Endothelial cell of umbilical vein (primary cell): ENCODE measurements at regions of chr5 and their contacts with region 1.

Region 1: DNA sequence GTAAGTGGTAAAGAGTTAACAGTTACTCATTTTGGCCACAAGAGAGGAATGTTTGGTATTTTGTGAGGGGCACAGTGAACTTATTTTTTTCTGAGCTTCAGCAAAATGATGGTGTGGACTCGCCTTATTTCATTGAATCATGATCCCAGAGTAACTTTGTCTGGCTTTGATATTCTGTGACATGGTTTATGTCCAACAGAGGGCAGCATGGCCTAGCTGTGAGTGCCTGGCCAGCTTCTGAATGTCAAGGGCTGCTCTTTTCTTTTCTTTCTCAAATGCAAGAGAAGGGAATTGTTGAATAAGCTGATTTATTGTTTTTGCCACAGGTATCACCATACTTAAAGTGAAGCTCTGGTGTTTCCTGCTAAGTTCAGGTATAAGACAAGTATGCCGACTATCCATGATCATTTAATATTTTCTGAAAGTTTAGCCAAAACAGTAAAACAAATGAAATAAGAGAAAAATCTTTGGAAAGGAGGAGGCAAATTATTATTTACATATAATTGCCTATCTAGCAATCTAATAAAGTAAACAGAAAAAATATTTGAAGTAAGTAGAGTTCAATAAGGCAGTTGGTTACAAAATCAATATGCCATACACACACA is 31.7 kb downstream of the MRPL22 start:
- DNase-seq: peak; percentile 74
- H3K4me3 ChIP-seq: no peak overlapping the region
- H3K27ac ChIP-seq: no peak overlapping the region
- H3K4me1 ChIP-seq: peaks cover 18% of the 10 kb centered on the region
- H3K27me3 ChIP-seq: no peaks in the 10 kb centered on the region
- CTCF ChIP-seq: peak; percentile 66 to 69
- POLR2A ChIP-seq: no peak

Region 2: DNA sequence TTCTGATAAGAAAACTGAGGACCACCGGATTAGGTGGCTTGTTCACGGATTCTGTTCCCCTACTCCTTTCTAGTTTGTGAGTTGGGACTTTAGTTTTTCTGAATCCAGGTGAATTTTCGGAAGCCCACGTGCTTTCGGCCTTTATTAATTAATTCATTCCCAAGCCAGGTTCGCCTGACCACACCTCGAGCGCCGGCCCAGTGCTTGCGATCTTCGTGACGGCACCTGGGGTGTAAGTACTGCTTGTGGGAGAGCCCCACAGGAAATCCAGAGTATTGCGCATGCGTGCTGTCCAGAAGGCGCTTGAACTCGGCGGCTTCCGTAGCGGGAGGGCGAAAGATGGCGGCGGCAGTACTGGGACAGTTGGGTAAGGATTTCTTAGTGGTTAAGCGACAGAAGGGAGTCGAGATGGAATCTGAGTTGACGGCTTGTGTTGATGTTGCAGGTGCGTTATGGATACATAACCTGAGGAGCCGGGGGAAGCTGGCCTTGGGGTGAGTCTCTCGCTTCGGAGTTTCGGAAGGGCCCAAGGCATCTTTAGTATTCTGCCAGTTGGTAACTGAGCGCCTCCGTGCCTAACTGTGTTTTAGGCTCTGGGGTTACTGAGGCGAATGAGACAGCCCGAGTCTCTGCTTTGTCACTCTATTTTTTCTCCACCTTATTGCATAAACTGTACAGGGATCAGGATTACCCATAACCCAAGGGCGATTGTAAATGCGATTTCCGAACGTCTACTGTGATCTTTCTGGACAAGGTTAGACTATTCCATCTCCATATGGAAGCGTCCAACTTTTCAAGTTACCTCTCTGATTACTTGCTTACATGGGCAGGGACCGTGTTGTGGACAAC is 31.6 kb before region 1 on chr5 and contains the start of gene MRPL22:
- CTCF ChIA-PET with region 1: interaction called, 35 read pairs
- POLR2A ChIA-PET with region 1: no interaction called
- dilution Hi-C with region 1: no loop called
- intact Hi-C with region 1: no loop called
- DNase-seq: peak; percentile 95
- H3K4me3 ChIP-seq: peak within 1 kb of the TSS; percentile 84 to 99 (median 91)
- H3K27ac ChIP-seq: peak within 1 kb of the TSS; percentile 81
- H3K4me1 ChIP-seq: peaks cover 56% of the 10 kb centered on the region
- H3K27me3 ChIP-seq: no peaks in the 10 kb centered on the region
- CTCF ChIP-seq: no peak
- POLR2A ChIP-seq: peak; percentile 86
- total RNA-seq, gene MRPL22: 90.8 and 112 TPM in 2 replicates

Region 3: DNA sequence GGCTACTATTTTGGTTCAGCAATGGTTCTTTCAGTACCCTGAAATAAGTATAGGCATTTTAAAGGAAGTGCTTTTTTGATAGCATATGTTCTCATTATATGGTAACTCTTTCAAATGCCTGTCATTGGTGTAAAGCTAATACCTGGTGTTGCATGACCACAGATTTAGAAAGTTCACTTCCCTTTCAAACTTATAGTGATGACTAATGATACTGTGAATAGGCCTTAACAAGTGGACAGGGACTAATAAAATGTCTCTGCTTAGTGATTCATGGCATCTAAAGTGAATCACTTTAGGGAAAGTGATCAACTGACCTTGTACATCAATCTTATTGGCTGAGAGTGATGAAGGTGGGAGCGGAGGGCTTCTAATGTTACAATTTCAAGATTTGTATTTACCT is 10.1 kb before region 1 on chr5:
- CTCF ChIA-PET with region 1: interaction called, 16 read pairs
- POLR2A ChIA-PET with region 1: no interaction called
- dilution Hi-C with region 1: no loop called
- intact Hi-C with region 1: no loop called
- DNase-seq: peak; percentile 34
- H3K4me3 ChIP-seq: no peak overlapping the region
- H3K27ac ChIP-seq: no peak overlapping the region
- H3K4me1 ChIP-seq: peaks cover 46% of the 10 kb centered on the region
- H3K27me3 ChIP-seq: no peaks in the 10 kb centered on the region
- CTCF ChIP-seq: no peak
- POLR2A ChIP-seq: no peak

Region 4: DNA sequence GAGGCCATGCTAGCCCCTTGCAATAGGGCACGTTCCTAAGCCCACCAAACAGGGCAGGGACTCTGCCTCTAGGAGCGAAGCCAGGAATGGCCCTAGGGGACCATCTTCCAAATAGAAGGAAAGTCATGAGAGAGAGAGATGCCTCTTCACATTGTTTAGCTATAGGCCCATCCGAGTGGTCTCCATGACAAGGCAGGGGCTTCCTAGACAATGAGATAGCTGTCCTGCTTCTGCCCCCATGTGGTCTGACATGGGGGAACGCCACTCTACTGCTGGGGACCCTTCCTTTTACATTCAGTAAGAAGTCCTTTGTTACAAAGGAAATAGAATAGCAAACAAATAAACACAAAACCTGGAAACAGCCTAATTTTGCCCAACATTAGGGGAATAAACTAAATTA is 23.1 kb after region 1 on chr5:
- CTCF ChIA-PET with region 1: interaction called, 48 read pairs
- POLR2A ChIA-PET with region 1: no interaction called
- dilution Hi-C with region 1: no loop called
- intact Hi-C with region 1: loop called (anchors 1 kb)
- DNase-seq: peak; percentile 39
- H3K4me3 ChIP-seq: no peak overlapping the region
- H3K27ac ChIP-seq: no peak overlapping the region
- H3K4me1 ChIP-seq: peaks cover 15% of the 10 kb centered on the region
- H3K27me3 ChIP-seq: no peaks in the 10 kb centered on the region
- CTCF ChIP-seq: peak; percentile 16 to 36
- POLR2A ChIP-seq: no peak

Region 5: DNA sequence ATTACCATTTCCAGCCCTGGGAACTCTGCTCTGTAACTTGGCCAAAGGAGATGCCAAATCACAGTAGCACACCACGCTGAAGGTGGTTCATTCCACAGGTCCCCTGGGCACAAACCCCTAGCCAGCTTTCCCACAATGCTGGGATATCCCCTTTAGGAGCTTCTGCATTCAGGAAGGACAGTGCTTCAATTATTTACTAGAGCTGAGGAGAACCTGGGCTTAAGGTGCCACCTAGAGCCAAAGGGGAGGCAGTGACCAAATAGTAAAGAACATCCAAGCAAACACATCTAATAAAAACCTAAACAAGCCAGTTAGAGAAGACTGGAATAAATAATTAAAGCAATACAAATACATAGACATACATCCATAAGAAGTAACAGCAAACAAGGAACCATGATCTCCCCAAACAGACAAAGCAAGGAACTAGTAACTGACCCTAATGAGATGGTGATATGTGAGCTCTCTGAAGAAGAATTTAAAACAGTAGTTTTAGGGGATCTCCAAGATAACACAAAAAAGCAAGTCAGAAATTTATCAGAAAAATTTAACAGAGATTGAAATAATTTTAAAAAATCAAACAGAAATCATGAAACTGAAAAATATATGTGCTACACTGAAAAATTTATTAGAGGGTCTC is 55.5 kb after region 1 on chr5:
- CTCF ChIA-PET with region 1: interaction called, 191 read pairs
- POLR2A ChIA-PET with region 1: no interaction called
- dilution Hi-C with region 1: no loop called
- intact Hi-C with region 1: loop called (anchors 1 kb)
- DNase-seq: peak; percentile 20
- H3K4me3 ChIP-seq: no peak overlapping the region
- H3K27ac ChIP-seq: no peak overlapping the region
- H3K4me1 ChIP-seq: no peaks in the 10 kb centered on the region
- H3K27me3 ChIP-seq: no peaks in the 10 kb centered on the region
- CTCF ChIP-seq: peak; percentile 22 to 28
- POLR2A ChIP-seq: no peak

Region 6: GRCh38 chr5:155147222-155147621 is 174.6 kb after region 1 on chr5:
- CTCF ChIA-PET with region 1: interaction called, 75 read pairs
- POLR2A ChIA-PET with region 1: no interaction called
- dilution Hi-C with region 1: no loop called
- intact Hi-C with region 1: loop called (anchors 1 kb)
- DNase-seq: peak; percentile 31
- H3K4me3 ChIP-seq: no peak overlapping the region
- H3K27ac ChIP-seq: no peak overlapping the region
- H3K4me1 ChIP-seq: no peaks in the 10 kb centered on the region
- H3K27me3 ChIP-seq: peaks cover 6 to 10% of the 10 kb centered on the region in 2 experiments
- CTCF ChIP-seq: no peak
- POLR2A ChIP-seq: no peak